H1 (cell line): ENCODE measurements at regions of chr1 and their contacts with region 1.

Region 1: DNA sequence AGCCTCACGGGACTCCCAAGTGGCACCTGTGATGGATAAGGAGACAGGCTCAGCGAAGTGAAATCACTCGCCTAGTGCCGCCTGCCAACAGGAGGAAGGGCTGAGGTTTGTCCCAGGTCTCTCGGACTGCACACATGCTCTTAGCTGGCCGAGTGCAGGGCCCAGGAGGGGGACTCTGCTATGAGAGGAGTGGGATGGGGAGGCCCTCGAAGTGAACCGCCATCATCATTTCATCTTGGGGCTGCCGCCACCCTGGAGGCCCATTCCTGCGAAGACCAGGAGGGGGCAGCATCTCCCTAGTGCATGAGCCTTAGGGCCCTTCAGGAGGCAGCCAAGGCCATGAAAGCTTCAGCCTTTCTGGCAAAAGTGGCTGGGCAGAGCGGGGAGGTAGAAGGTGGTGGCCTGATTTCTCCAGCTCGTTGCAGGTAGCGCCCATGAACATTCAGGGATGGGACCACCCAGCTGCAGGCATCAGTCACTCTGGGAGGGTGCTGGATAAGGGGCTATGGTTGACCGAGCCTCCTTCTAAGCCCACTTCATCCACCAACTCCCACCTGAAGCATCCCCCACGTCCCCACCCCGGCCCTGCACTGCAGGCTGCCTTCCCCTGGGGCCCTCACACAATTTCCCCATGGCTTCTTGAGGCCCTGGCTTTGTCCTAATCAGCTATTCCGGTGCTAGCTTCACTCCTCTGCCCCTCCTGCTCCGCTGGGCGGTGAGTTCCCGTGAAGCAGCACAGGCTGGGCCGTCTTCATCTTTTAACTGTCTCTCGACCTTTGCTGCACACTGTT is 17.2 kb upstream of the RASSF5 start:
- DNase-seq: peak; percentile 56 to 97
- H3K4me3 ChIP-seq: no peak overlapping the region
- H3K27ac ChIP-seq: no peak overlapping the region
- H3K4me1 ChIP-seq: no peaks in the 10 kb centered on the region
- H3K27me3 ChIP-seq: no peaks in the 10 kb centered on the region
- CTCF ChIP-seq: peak; percentile 96 to 99 (median 98)
- EP300 ChIP-seq: no peak
- POLR2A ChIP-seq: no peak
- RAD21 ChIP-seq: peak; percentile 95 to 97

Region 2: GRCh38 chr1:206143537-206144172 is 346.5 kb before region 1 on chr1:
- CTCF ChIA-PET with region 1: no interaction called
- POLR2A ChIA-PET with region 1: no interaction called
- DNase-seq: no peak
- H3K4me3 ChIP-seq: no peak overlapping the region
- H3K27ac ChIP-seq: no peak overlapping the region
- H3K4me1 ChIP-seq: no peaks in the 10 kb centered on the region
- H3K27me3 ChIP-seq: no peaks in the 10 kb centered on the region
- CTCF ChIP-seq: no peak
- EP300 ChIP-seq: no peak
- POLR2A ChIP-seq: no peak
- RAD21 ChIP-seq: no peak

Region 3: DNA sequence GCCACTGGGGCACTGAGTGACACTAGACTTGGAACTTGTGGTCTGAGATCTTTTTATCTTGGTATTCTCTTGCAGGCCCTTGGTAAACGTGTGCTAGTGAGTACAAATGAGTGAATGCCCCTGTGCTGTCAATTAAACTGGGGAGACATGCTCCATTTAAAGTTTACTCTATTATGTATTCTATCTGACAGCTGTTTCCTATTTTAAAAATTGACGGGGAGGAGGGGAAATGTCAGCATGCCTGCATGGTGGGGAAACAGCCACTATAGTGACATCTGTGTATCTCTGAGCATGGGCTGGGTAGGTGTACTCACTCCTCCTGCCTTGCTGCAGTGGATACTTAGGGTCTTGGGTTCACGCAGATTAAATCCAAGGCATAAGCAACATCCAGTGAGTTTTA is 78.9 kb before region 1 on chr1:
- CTCF ChIA-PET with region 1: no interaction called
- POLR2A ChIA-PET with region 1: no interaction called
- DNase-seq: no peak
- H3K4me3 ChIP-seq: no peak overlapping the region
- H3K27ac ChIP-seq: no peak overlapping the region
- H3K4me1 ChIP-seq: no peaks in the 10 kb centered on the region
- H3K27me3 ChIP-seq: peaks cover 0 to 1% (median 0%) of the 10 kb centered on the region in 4 experiments; a peak in 1 of 7 replicates
- CTCF ChIP-seq: no peak
- EP300 ChIP-seq: no peak
- POLR2A ChIP-seq: no peak
- RAD21 ChIP-seq: no peak

Region 4: GRCh38 chr1:206479183-206480125 is 10.7 kb before region 1 on chr1:
- CTCF ChIA-PET with region 1: interaction called, 81 read pairs
- POLR2A ChIA-PET with region 1: interaction called, 3 read pairs
- DNase-seq: peak; percentile 60 to 81
- H3K4me3 ChIP-seq: no peak overlapping the region
- H3K27ac ChIP-seq: no peak overlapping the region
- H3K4me1 ChIP-seq: peaks cover 0 to 3% (median 0%) of the 10 kb centered on the region in 4 experiments; a peak in 1 of 7 replicates
- H3K27me3 ChIP-seq: no peaks in the 10 kb centered on the region
- CTCF ChIP-seq: peak; percentile 65 to 87 (median 82)
- EP300 ChIP-seq: no peak
- POLR2A ChIP-seq: no peak
- RAD21 ChIP-seq: peak; percentile 81 to 82

Region 5: GRCh38 chr1:206529425-206529824 is 39.2 kb after region 1 on chr1:
- CTCF ChIA-PET with region 1: interaction called, 20 read pairs
- POLR2A ChIA-PET with region 1: no interaction called
- DNase-seq: no peak
- H3K4me3 ChIP-seq: no peak overlapping the region
- H3K27ac ChIP-seq: no peak overlapping the region
- H3K4me1 ChIP-seq: no peaks in the 10 kb centered on the region
- H3K27me3 ChIP-seq: no peaks in the 10 kb centered on the region
- CTCF ChIP-seq: no peak
- EP300 ChIP-seq: no peak
- POLR2A ChIP-seq: no peak
- RAD21 ChIP-seq: no peak

Region 6: GRCh38 chr1:206551986-206552326 is 61.8 kb after region 1 on chr1:
- CTCF ChIA-PET with region 1: interaction called, 34 read pairs
- POLR2A ChIA-PET with region 1: no interaction called
- DNase-seq: no peak
- H3K4me3 ChIP-seq: no peak overlapping the region
- H3K27ac ChIP-seq: no peak overlapping the region
- H3K4me1 ChIP-seq: peaks cover 0 to 7% (median 2%) of the 10 kb centered on the region in 4 experiments; a peak in 3 of 7 replicates
- H3K27me3 ChIP-seq: peaks cover 0 to 8% (median 5%) of the 10 kb centered on the region in 4 experiments; a peak in 4 of 7 replicates
- CTCF ChIP-seq: no peak
- EP300 ChIP-seq: no peak
- POLR2A ChIP-seq: no peak
- RAD21 ChIP-seq: no peak

Region 7: GRCh38 chr1:206575165-206575893 is 85.2 kb after region 1 on chr1:
- CTCF ChIA-PET with region 1: interaction called, 239 read pairs
- POLR2A ChIA-PET with region 1: no interaction called
- DNase-seq: no peak
- H3K4me3 ChIP-seq: no peak overlapping the region
- H3K27ac ChIP-seq: no peak overlapping the region
- H3K4me1 ChIP-seq: no peaks in the 10 kb centered on the region
- H3K27me3 ChIP-seq: 0 out of 7 replicates have a peak, but pooled peaks cover 0 to 3% (median 0%) of the 10 kb centered on the region in 4 experiments
- CTCF ChIP-seq: no peak
- EP300 ChIP-seq: no peak
- POLR2A ChIP-seq: no peak
- RAD21 ChIP-seq: no peak

Region 8: GRCh38 chr1:206612129-206612876 is 122.1 kb after region 1 on chr1 and contains the start of gene EIF2D:
- CTCF ChIA-PET with region 1: interaction called, 12 read pairs
- POLR2A ChIA-PET with region 1: no interaction called
- DNase-seq: peak; percentile 86 to 98
- H3K4me3 ChIP-seq: peak within 1 kb of the TSS; percentile 83 to 91 (median 84)
- H3K27ac ChIP-seq: peak within 1 kb of the TSS; percentile 89
- H3K4me1 ChIP-seq: peaks cover 0 to 6% (median 4%) of the 10 kb centered on the region in 4 experiments; a peak in 5 of 7 replicates
- H3K27me3 ChIP-seq: no peaks in the 10 kb centered on the region; a peak in 1 of 7 replicates
- CTCF ChIP-seq: peak; percentile 90 to 99 (median 92)
- EP300 ChIP-seq: peak in 1 of 2 experiments; percentile 88; a peak in 1 of 3 replicates
- POLR2A ChIP-seq: peak; percentile 92 to 97
- RAD21 ChIP-seq: peak; percentile 35 to 39; a peak in 2 of 4 replicates
- total RNA-seq, gene EIF2D: 33.1 and 36.1 TPM in 2 replicates